Breast epithelium (tissue), 4 donors: ENCODE measurements at regions of chr1 and their contacts with region 1.

Region 1: DNA sequence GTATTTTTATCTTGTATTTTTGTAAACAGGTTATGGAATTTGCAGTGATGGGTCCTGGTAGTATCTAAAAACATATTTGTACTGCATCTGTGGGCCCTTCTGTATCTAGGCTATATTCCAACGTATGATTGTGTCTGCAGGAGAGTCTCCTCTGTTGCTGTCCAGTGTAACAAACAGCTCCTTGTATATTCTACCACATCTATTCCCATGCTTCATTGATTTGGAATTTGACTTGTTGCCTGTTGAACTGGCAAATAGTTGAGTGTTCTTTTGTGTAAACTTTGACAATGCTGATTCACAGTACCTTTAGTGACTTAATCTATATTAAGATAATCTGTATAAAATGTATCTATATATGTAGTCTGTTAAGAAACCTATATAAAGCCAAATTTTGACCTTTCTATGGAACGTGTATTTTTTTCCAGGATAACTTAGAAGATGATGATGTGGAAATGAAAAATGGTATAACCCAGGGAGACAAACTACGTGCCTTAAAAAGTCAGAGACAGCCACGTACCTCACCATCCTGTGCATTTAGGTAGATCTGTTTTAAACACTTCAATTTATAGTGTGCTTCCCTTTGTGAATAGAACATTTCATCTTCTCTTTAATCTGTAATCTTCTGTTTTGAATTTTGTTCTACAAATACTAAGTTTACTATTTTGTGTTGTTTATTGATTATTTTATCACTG is 43.4 kb upstream of the GPR88 start:
- DNase-seq: no peak
- H3K4me3 ChIP-seq: no peak overlapping the region
- H3K27ac ChIP-seq: no peak overlapping the region
- H3K4me1 ChIP-seq: no peaks in the 10 kb centered on the region
- H3K27me3 ChIP-seq: no peaks in the 10 kb centered on the region
- CTCF ChIP-seq: no peak
- POLR2A ChIP-seq: no peak

Region 2: GRCh38 chr1:100308777-100309176 is 185.8 kb before region 1 on chr1:
- intact Hi-C with region 1: no loop called
- DNase-seq: no peak
- H3K4me3 ChIP-seq: no peak overlapping the region
- H3K27ac ChIP-seq: no peak overlapping the region
- H3K4me1 ChIP-seq: no peaks in the 10 kb centered on the region
- H3K27me3 ChIP-seq: no peaks in the 10 kb centered on the region
- CTCF ChIP-seq: no peak
- POLR2A ChIP-seq: no peak

Region 3: DNA sequence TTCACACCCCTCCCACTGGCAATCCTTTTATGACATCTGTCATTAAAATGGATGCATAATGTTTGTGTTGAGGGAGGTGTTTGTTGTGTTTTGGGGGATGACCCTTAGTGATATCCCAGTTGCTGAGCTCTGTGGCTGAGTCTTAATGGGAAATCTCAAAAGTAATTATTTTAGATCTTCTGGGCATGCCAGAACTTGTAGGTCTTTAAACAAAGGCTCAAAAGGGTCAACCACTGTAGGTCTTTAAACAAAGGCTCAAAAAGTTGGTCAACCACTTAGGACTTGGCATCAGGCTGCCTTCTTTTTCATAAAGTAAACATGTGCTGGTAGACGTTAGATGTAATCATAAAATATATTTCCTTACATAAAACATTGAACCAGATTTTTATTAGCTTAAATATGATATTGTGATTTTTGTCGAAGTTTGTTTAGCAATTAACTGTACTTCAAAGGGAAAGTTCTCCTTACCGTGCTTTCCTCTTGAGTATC is 64.2 kb before region 1 on chr1:
- intact Hi-C with region 1: no loop called
- DNase-seq: no peak
- H3K4me3 ChIP-seq: no peak overlapping the region
- H3K27ac ChIP-seq: peak overlapping the region in 1 of 2 donors; percentile 56
- H3K4me1 ChIP-seq: no peaks in the 10 kb centered on the region
- H3K27me3 ChIP-seq: no peaks in the 10 kb centered on the region
- CTCF ChIP-seq: no peak
- POLR2A ChIP-seq: no peak

Region 4: GRCh38 chr1:100847361-100848082 is 353.0 kb after region 1 on chr1:
- intact Hi-C with region 1: no loop called
- DNase-seq: no peak
- H3K4me3 ChIP-seq: peak overlapping the region; percentile 9 to 52 (median 10)
- H3K27ac ChIP-seq: peak overlapping the region in 1 of 2 donors; percentile 27
- H3K4me1 ChIP-seq: no peaks in the 10 kb centered on the region
- H3K27me3 ChIP-seq: no peaks in the 10 kb centered on the region
- CTCF ChIP-seq: no peak
- POLR2A ChIP-seq: no peak

Region 5: DNA sequence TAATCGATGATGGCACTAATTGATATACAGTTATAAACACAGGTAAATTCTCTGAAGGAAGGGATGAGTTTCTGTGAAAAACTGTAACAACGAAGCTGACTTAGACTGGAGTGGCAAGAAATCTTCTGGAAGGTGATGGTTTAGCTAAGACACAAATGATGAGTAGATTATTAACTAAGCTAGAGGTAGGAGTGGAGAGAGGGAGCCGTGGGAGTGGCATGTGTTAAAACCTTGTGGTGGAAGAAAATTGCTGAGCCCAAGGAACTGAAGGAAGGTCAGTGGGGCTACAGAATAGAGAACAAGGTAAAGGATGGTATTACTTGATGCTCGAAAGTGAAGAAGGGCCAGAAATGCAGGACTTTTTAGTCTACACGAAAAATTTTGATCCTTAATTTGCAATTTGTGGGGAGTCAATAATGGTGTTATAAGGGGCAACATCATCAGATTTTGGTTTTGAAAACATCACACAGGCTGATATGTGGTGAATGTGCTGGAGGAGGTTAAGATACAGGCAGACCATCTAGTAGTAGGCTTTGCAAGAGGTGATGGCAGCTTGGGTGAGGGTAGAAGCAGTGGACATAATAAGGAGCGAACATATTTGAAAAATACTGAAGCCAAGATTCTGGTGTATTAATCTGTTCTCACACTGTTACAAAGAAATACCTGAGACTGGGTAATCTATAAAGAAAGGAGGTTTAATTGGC is 836.0 kb after region 1 on chr1:
- intact Hi-C with region 1: loop called (anchors 5 kb)
- DNase-seq: no peak
- H3K4me3 ChIP-seq: no peak overlapping the region
- H3K27ac ChIP-seq: no peak overlapping the region
- H3K4me1 ChIP-seq: no peaks in the 10 kb centered on the region
- H3K27me3 ChIP-seq: no peaks in the 10 kb centered on the region
- CTCF ChIP-seq: no peak
- POLR2A ChIP-seq: no peak